ENCODE measurements at regions of chr12 and their contacts with region 1.

Region 1: GRCh38 chr12:57904848-57905811 is 36.2 kb upstream of the ATP23 start:
- DNase-seq: peak; percentile 91
- H3K4me3 Mint-ChIP-seq: peak overlapping the region; percentile 52
- H3K27ac Mint-ChIP-seq: peak overlapping the region; percentile 10
- H3K4me1 Mint-ChIP-seq: peaks cover 7% of the 10 kb centered on the region
- H3K27me3 Mint-ChIP-seq: peaks cover 14% of the 10 kb centered on the region

Region 2: GRCh38 chr12:57803319-57803893 is 101.7 kb before region 1 on chr12:
- CTCF ChIA-PET with region 1: interaction called, 78 read pairs
- POLR2A ChIA-PET with region 1: no interaction called
- intact Hi-C with region 1: loop called (anchors 1 kb)
- DNase-seq: peak; percentile 43
- H3K4me3 Mint-ChIP-seq: no peak overlapping the region
- H3K27ac Mint-ChIP-seq: no peak overlapping the region
- H3K4me1 Mint-ChIP-seq: no peaks in the 10 kb centered on the region
- H3K27me3 Mint-ChIP-seq: no peaks in the 10 kb centered on the region

Region 3: GRCh38 chr12:57829025-57829777 is 75.9 kb before region 1 on chr12:
- CTCF ChIA-PET with region 1: interaction called, 153 read pairs
- POLR2A ChIA-PET with region 1: interaction called, 4 read pairs
- intact Hi-C with region 1: loop called (anchors 1 kb)
- DNase-seq: no peak
- H3K4me3 Mint-ChIP-seq: no peak overlapping the region
- H3K27ac Mint-ChIP-seq: peak overlapping the region; percentile 42
- H3K4me1 Mint-ChIP-seq: peaks cover 40% of the 10 kb centered on the region
- H3K27me3 Mint-ChIP-seq: no peaks in the 10 kb centered on the region

Region 4: GRCh38 chr12:57836442-57837375 is 68.4 kb before region 1 on chr12:
- CTCF ChIA-PET with region 1: interaction called, 153 read pairs
- POLR2A ChIA-PET with region 1: interaction called, 4 read pairs
- intact Hi-C with region 1: loop called (anchors 1 kb)
- DNase-seq: peak; percentile 72
- H3K4me3 Mint-ChIP-seq: peak overlapping the region; percentile 48
- H3K27ac Mint-ChIP-seq: peak overlapping the region; percentile 86
- H3K4me1 Mint-ChIP-seq: peaks cover 93% of the 10 kb centered on the region
- H3K27me3 Mint-ChIP-seq: no peaks in the 10 kb centered on the region

Measured in activated CD4-positive, alpha-beta memory T cell treated with anti-CD3 and anti-CD28 coated beads for 36 hours (primary cell).